PC-9 (cell line): ENCODE measurements at regions of chr6 and their contacts with region 1.

Region 1: GRCh38 chr6:28542440-28543296 is 17.0 kb downstream of the GPX5 start:
- DNase-seq: peak; percentile 80 to 83
- H3K4me3 ChIP-seq: peak overlapping the region; percentile 65; the same call in 1 of the 2 replicates
- H3K27ac ChIP-seq: 0 out of 2 replicates have a peak overlapping the region, but pooled peaks have one; percentile 20
- H3K4me1 ChIP-seq: peaks cover 12% of the 10 kb centered on the region; the same call in 1 of the 2 replicates
- H3K27me3 ChIP-seq: no peaks in the 10 kb centered on the region
- CTCF ChIP-seq: peak; percentile 73

Region 2: GRCh38 chr6:27177485-27178406 is 1364.9 kb before region 1 on chr6:
- CTCF ChIA-PET with region 1: no interaction called
- POLR2A ChIA-PET with region 1: interaction called, 10 read pairs
- intact Hi-C with region 1: no loop called
- DNase-seq: peak; percentile 80 to 88
- H3K4me3 ChIP-seq: peak overlapping the region; percentile 97
- H3K27ac ChIP-seq: peak overlapping the region; percentile 67
- H3K4me1 ChIP-seq: no peaks in the 10 kb centered on the region; the same call in 1 of the 2 replicates
- H3K27me3 ChIP-seq: no peaks in the 10 kb centered on the region
- CTCF ChIP-seq: peak; percentile 67

Region 3: GRCh38 chr6:27902335-27903314 is 640.0 kb before region 1 on chr6:
- CTCF ChIA-PET with region 1: no interaction called
- POLR2A ChIA-PET with region 1: no interaction called
- intact Hi-C with region 1: no loop called
- DNase-seq: peak; percentile 76 to 86
- H3K4me3 ChIP-seq: peak overlapping the region; percentile 73
- H3K27ac ChIP-seq: peak overlapping the region; percentile 74
- H3K4me1 ChIP-seq: peaks cover 9% of the 10 kb centered on the region
- H3K27me3 ChIP-seq: no peaks in the 10 kb centered on the region
- CTCF ChIP-seq: no peak

Region 4: GRCh38 chr6:28161410-28162079 is 381.1 kb before region 1 on chr6:
- CTCF ChIA-PET with region 1: no interaction called
- POLR2A ChIA-PET with region 1: interaction called, 10 read pairs
- intact Hi-C with region 1: no loop called
- DNase-seq: peak; percentile 70 to 93
- H3K4me3 ChIP-seq: peak overlapping the region; percentile 74
- H3K27ac ChIP-seq: no peak overlapping the region
- H3K4me1 ChIP-seq: peaks cover 6% of the 10 kb centered on the region; the same call in 1 of the 2 replicates
- H3K27me3 ChIP-seq: no peaks in the 10 kb centered on the region
- CTCF ChIP-seq: no peak

Region 5: GRCh38 chr6:28443112-28443773 is 99.4 kb before region 1 on chr6 and contains the start of gene ZSCAN23:
- CTCF ChIA-PET with region 1: no interaction called
- POLR2A ChIA-PET with region 1: no interaction called
- intact Hi-C with region 1: loop called (anchors 1 kb)
- DNase-seq: peak; percentile 78
- H3K4me3 ChIP-seq: peak within 1 kb of the TSS; percentile 83
- H3K27ac ChIP-seq: no peak within 1 kb of the TSS
- H3K4me1 ChIP-seq: peaks cover 14% of the 10 kb centered on the region
- H3K27me3 ChIP-seq: no peaks in the 10 kb centered on the region
- CTCF ChIP-seq: no peak
- total RNA-seq, gene ZSCAN23: 9.1 and 12.0 TPM in 2 replicates

Region 6: GRCh38 chr6:28555136-28555535 is 12.5 kb after region 1 on chr6:
- CTCF ChIA-PET with region 1: no interaction called
- POLR2A ChIA-PET with region 1: interaction called, 5 read pairs
- intact Hi-C with region 1: loop called (anchors 1 kb)
- DNase-seq: no peak
- H3K4me3 ChIP-seq: no peak overlapping the region
- H3K27ac ChIP-seq: no peak overlapping the region
- H3K4me1 ChIP-seq: no peaks in the 10 kb centered on the region
- H3K27me3 ChIP-seq: peaks cover 11% of the 10 kb centered on the region
- CTCF ChIP-seq: no peak

Region 7: GRCh38 chr6:28648035-28648877 is 105.6 kb after region 1 on chr6:
- CTCF ChIA-PET with region 1: no interaction called
- POLR2A ChIA-PET with region 1: no interaction called
- intact Hi-C with region 1: loop called (anchors 10 kb)
- DNase-seq: peak; percentile 68 to 74
- H3K4me3 ChIP-seq: peak overlapping the region; percentile 74
- H3K27ac ChIP-seq: no peak overlapping the region
- H3K4me1 ChIP-seq: peaks cover 11% of the 10 kb centered on the region; the same call in 1 of the 2 replicates
- H3K27me3 ChIP-seq: no peaks in the 10 kb centered on the region
- CTCF ChIP-seq: no peak